IMR-90 (cell line): ENCODE measurements at regions of chr3 and their contacts with region 1.

Region 1: GRCh38 chr3:145649368-145649887 is 511.6 kb downstream of the PLOD2 start:
- DNase-seq: no peak
- ATAC-seq: no peak
- H3K4me3 ChIP-seq: no peak overlapping the region
- H3K27ac ChIP-seq: no peak overlapping the region
- H3K4me1 ChIP-seq: no peaks in the 10 kb centered on the region
- H3K27me3 ChIP-seq: no peaks in the 10 kb centered on the region
- CTCF ChIP-seq: no peak
- POLR2A ChIP-seq: no peak
- RAD21 ChIP-seq: no peak

Region 2: GRCh38 chr3:144457758-144458157 is 1191.7 kb before region 1 on chr3:
- CTCF ChIA-PET with region 1: no interaction called
- POLR2A ChIA-PET with region 1: no interaction called
- dilution Hi-C with region 1: no loop called
- in situ Hi-C with region 1: no loop called
- intact Hi-C with region 1: loop called (anchors 2 kb)
- DNase-seq: no peak
- ATAC-seq: no peak
- H3K4me3 ChIP-seq: no peak overlapping the region
- H3K27ac ChIP-seq: no peak overlapping the region
- H3K4me1 ChIP-seq: no peaks in the 10 kb centered on the region
- H3K27me3 ChIP-seq: no peaks in the 10 kb centered on the region
- CTCF ChIP-seq: no peak
- POLR2A ChIP-seq: no peak
- RAD21 ChIP-seq: no peak

Region 3: DNA sequence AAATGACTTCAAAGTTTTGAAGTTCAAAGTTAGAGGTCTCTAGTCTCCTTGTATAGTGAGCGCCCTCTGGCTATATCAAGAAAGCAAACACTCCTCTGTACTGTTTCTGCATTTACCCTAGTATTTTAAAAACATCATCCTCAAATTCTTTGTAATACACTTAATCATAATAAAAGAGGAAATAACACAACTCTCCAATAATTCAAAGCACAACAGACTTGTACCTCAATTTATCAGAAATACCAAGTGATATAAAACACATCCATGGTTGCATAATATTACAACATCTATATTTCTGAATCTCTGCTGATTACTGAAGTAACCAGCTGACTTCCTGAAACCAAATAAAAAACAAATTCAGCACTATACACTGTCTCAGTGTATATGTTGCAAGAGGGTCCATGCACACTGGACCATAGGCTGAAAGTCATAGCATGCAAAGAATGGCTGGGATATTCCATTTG is 499.1 kb after region 1 on chr3:
- CTCF ChIA-PET with region 1: no interaction called
- POLR2A ChIA-PET with region 1: no interaction called
- dilution Hi-C with region 1: no loop called
- in situ Hi-C with region 1: no loop called
- intact Hi-C with region 1: no loop called
- DNase-seq: peak; percentile 47
- ATAC-seq: peak; percentile 79
- H3K4me3 ChIP-seq: no peak overlapping the region
- H3K27ac ChIP-seq: no peak overlapping the region
- H3K4me1 ChIP-seq: peaks cover 11% of the 10 kb centered on the region
- H3K27me3 ChIP-seq: no peaks in the 10 kb centered on the region
- CTCF ChIP-seq: peak; percentile 34
- POLR2A ChIP-seq: no peak
- RAD21 ChIP-seq: peak; percentile 37